B cell (primary cell): ENCODE measurements at regions of chr17 and their contacts with region 1.

Region 1: DNA sequence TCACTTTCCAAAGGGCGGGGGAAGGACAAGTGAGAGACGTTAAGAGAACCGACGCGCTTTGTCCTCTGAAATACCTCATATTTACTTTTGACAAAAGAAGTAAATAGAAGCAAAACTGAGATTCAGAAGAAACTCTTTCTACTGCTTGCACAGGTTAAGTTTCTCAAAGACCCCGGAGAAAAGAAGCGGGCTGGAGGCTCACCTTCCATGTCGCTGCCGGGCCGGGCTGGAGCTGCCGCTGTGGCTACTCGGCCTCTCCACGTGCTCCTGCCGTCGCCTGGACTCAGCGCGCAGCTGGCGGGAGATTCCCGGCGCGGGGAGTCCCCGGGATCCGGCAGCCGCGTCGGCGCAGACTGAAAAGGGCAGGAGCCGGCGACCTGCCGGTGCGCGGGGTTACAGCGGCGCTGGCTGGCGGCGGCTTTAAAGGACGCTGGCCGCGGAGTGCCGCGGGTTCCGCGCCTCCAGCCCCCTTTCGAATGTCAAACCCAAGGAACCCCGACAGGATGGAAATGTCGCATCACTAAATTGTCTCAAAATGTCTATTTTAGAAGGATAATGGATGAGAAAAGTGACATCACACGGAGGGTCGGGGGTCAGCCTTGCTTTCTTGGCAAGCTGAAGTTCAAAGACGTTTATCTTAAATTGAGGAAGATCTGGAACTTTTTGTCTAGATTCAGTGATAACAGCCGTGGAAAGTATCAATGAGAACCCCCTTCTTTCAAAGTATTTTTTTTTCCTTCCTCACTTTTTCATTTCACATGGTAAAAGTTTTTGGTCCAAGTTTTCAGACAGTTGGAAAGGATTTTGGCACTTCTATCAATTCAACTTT is at the start of gene IKZF3:
- DNase-seq: peak; percentile 90
- ATAC-seq: peak; percentile 62
- H3K4me3 ChIP-seq: peak within 1 kb of the TSS; percentile 80 to 99 (median 91)
- H3K4me3 Mint-ChIP-seq: peak within 1 kb of the TSS; percentile 99
- H3K27ac ChIP-seq: peak within 1 kb of the TSS; percentile 94 to 96
- H3K27ac Mint-ChIP-seq: peak within 1 kb of the TSS; percentile 87
- H3K4me1 ChIP-seq: peaks cover 43 to 55% of the 10 kb centered on the region in 2 donors
- H3K4me1 Mint-ChIP-seq: peaks cover 62% of the 10 kb centered on the region
- H3K27me3 ChIP-seq: no peaks in the 10 kb centered on the region
- H3K27me3 Mint-ChIP-seq: no peaks in the 10 kb centered on the region
- CTCF ChIP-seq: peak; percentile 45
- total RNA-seq, gene IKZF3: 178 and 187 TPM in 2 replicates

Region 2: DNA sequence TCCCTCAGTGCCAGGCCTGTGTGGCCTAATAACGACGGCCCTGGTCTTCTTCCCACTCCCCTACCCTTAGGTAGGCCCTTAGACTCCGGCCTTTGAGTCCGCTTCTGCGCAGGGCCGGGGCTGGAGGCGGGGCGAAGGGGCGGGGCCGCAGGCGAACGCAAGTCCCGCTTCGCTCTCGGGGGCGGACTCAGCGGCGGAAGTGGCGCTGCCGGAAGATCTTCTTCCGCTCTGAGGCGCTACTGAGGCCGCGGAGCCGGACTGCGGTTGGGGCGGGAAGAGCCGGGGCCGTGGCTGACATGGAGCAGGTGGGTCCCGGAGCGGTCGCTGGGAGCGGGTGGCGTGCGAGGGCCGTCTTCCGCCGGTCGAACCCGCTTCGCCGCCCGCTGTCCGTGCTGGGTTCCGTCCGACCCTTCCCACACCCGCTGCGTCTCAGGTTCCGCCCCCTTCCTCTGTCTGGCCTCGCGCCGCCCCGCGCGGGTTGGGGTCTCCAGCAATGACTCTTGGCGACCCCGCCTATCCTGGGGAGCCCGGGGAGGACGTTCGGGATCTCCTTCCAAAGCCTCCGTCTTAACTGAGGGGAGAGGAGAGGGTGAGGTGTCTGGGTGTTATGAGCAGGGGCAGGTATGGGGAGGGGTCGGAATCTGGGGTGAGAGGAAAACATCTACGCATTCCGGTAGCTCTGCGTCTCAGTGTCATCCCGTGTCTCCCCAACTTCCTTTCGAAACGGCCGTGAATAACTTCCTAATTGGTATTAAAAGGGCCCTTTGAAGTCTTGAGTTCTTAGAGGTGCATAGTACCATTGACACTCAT is 227.0 kb before region 1 on chr17 and contains the start of gene STARD3:
- CTCF ChIA-PET with region 1: interaction called, 11 read pairs
- POLR2A ChIA-PET with region 1: no interaction called
- intact Hi-C with region 1: no loop called
- DNase-seq: peak; percentile 93
- ATAC-seq: peak; percentile 92
- H3K4me3 ChIP-seq: peak within 1 kb of the TSS; percentile 76 to 94 (median 82)
- H3K4me3 Mint-ChIP-seq: peak within 1 kb of the TSS; percentile 95
- H3K27ac ChIP-seq: peak within 1 kb of the TSS; percentile 89 to 90
- H3K27ac Mint-ChIP-seq: peak within 1 kb of the TSS; percentile 91
- H3K4me1 ChIP-seq: peaks cover 49 to 63% of the 10 kb centered on the region in 2 donors
- H3K4me1 Mint-ChIP-seq: peaks cover 60% of the 10 kb centered on the region
- H3K27me3 ChIP-seq: peaks cover 0 to 3% (median 0%) of the 10 kb centered on the region in 4 experiments
- H3K27me3 Mint-ChIP-seq: no peaks in the 10 kb centered on the region
- CTCF ChIP-seq: no peak
- total RNA-seq, gene STARD3: 93.1 and 101 TPM in 2 replicates

Region 3: DNA sequence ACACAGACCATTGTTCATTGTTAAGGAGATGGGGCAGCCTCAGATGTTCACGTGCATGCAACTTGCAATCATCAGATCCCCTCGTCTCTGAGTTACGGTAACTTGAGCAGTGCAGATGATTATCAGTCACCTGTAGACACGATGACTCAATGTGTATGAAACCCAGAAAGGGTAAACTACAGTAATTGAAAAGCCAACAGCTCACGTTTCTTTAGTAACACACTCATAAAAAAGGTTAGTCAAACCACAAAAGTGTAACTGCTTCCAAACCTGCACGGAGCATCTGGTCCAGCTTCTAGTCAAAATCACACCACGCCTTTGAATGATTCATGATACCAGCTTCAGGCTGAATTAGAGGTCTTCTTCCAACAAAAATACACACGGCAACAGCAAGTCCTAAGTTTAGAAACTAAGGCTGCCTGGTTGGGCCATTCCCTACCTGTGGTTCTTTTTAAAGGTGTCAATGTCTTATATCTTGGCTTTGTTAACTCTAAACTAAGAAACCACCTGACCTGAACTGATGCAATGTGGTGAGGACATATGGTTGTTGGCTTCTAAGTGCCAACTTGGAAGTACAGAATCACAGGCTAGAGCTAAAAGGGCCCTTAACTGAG is 94.1 kb before region 1 on chr17:
- CTCF ChIA-PET with region 1: interaction called, 6 read pairs
- POLR2A ChIA-PET with region 1: interaction called, 4 read pairs
- intact Hi-C with region 1: loop called (anchors 5 kb)
- DNase-seq: no peak
- ATAC-seq: peak; percentile 67
- H3K4me3 ChIP-seq: no peak overlapping the region
- H3K4me3 Mint-ChIP-seq: peak overlapping the region; percentile 79
- H3K27ac ChIP-seq: peak overlapping the region; percentile 14 to 86
- H3K27ac Mint-ChIP-seq: peak overlapping the region; percentile 98
- H3K4me1 ChIP-seq: peaks cover 84 to 90% of the 10 kb centered on the region in 2 donors
- H3K4me1 Mint-ChIP-seq: peaks cover 95% of the 10 kb centered on the region
- H3K27me3 ChIP-seq: no peaks in the 10 kb centered on the region
- H3K27me3 Mint-ChIP-seq: no peaks in the 10 kb centered on the region
- CTCF ChIP-seq: no peak

Region 4: GRCh38 chr17:39794249-39794970 is 69.7 kb before region 1 on chr17:
- CTCF ChIA-PET with region 1: interaction called, 7 read pairs
- POLR2A ChIA-PET with region 1: interaction called, 10 read pairs
- intact Hi-C with region 1: loop called (anchors 1 kb)
- DNase-seq: peak; percentile 89
- ATAC-seq: peak; percentile 95
- H3K4me3 ChIP-seq: peak overlapping the region in 1 of 5 experiments; percentile 30
- H3K4me3 Mint-ChIP-seq: peak overlapping the region; percentile 69
- H3K27ac ChIP-seq: peak overlapping the region; percentile 70 to 86
- H3K27ac Mint-ChIP-seq: peak overlapping the region; percentile 91
- H3K4me1 ChIP-seq: peaks cover 81 to 86% of the 10 kb centered on the region in 2 donors
- H3K4me1 Mint-ChIP-seq: peaks cover 72% of the 10 kb centered on the region
- H3K27me3 ChIP-seq: no peaks in the 10 kb centered on the region
- H3K27me3 Mint-ChIP-seq: no peaks in the 10 kb centered on the region
- CTCF ChIP-seq: no peak

Region 5: GRCh38 chr17:39845052-39845846 is 18.9 kb before region 1 on chr17:
- CTCF ChIA-PET with region 1: interaction called, 6 read pairs
- POLR2A ChIA-PET with region 1: interaction called, 6 read pairs
- intact Hi-C with region 1: loop called (anchors 2 kb)
- DNase-seq: no peak
- ATAC-seq: no peak
- H3K4me3 ChIP-seq: no peak overlapping the region
- H3K4me3 Mint-ChIP-seq: no peak overlapping the region
- H3K27ac ChIP-seq: peak overlapping the region in 1 of 2 donors; percentile 64
- H3K27ac Mint-ChIP-seq: peak overlapping the region; percentile 68
- H3K4me1 ChIP-seq: peaks cover 58 to 65% of the 10 kb centered on the region in 2 donors
- H3K4me1 Mint-ChIP-seq: peaks cover 69% of the 10 kb centered on the region
- H3K27me3 ChIP-seq: no peaks in the 10 kb centered on the region
- H3K27me3 Mint-ChIP-seq: no peaks in the 10 kb centered on the region
- CTCF ChIP-seq: no peak